BJ (cell line): ENCODE measurements at regions of chr14 and their contacts with region 1.

Region 1: GRCh38 chr14:103808403-103809001 is 38.9 kb downstream of the PPP1R13B start:
- DNase-seq: no peak
- H3K4me3 ChIP-seq: no peak overlapping the region
- H3K27me3 ChIP-seq: no peaks in the 10 kb centered on the region
- CTCF ChIP-seq: peak; percentile 88

Region 2: GRCh38 chr14:103546652-103547454 is 261.6 kb before region 1 on chr14:
- CTCF ChIA-PET with region 1: no interaction called
- POLR2A ChIA-PET with region 1: no interaction called
- DNase-seq: no peak
- H3K4me3 ChIP-seq: no peak overlapping the region
- H3K27me3 ChIP-seq: no peaks in the 10 kb centered on the region
- CTCF ChIP-seq: peak; percentile 88

Region 3: GRCh38 chr14:103819503-103820307 is 11.2 kb after region 1 on chr14:
- CTCF ChIA-PET with region 1: interaction called, 21 read pairs
- POLR2A ChIA-PET with region 1: no interaction called
- DNase-seq: no peak
- H3K4me3 ChIP-seq: no peak overlapping the region
- H3K27me3 ChIP-seq: no peaks in the 10 kb centered on the region
- CTCF ChIP-seq: no peak

Region 4: GRCh38 chr14:103984196-103984595 is 175.7 kb after region 1 on chr14:
- CTCF ChIA-PET with region 1: interaction called, 79 read pairs
- POLR2A ChIA-PET with region 1: no interaction called
- DNase-seq: no peak
- H3K4me3 ChIP-seq: no peak overlapping the region
- H3K27me3 ChIP-seq: no peaks in the 10 kb centered on the region
- CTCF ChIP-seq: no peak